Gastrocnemius medialis (tissue), 4 donors: ENCODE measurements at regions of chr1 and their contacts with region 1.

Region 1: GRCh38 chr1:172938676-172939075 is 112.1 kb downstream of the TNFSF18 start:
- DNase-seq: no peak
- ATAC-seq: no peak
- H3K4me3 ChIP-seq: no peak overlapping the region
- H3K27ac ChIP-seq: no peak overlapping the region
- H3K4me1 ChIP-seq: no peaks in the 10 kb centered on the region
- H3K27me3 ChIP-seq: no peaks in the 10 kb centered on the region
- CTCF ChIP-seq: no peak
- POLR2A ChIP-seq: no peak

Region 2: DNA sequence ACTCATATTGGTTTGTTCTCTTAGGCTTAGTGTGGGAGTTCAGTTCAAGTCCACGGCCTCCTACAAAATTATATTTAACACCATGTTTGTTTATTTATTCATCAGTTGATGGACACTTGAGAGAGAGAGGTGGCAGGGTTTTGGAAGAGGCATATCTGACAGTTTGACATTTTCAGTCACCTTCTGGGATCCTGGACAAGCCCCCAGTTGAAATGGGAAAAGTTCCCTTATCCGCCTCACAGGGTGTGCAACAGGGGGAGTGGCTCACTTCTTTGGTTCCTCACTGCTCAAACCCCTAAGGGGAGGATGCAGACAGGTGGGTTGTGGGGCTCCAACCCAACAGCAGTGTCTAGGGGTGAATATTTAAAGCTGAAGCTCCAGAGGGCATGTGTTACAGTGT is 164.3 kb after region 1 on chr1:
- in situ Hi-C with region 1: no loop called
- intact Hi-C with region 1: no loop called
- DNase-seq: no peak
- ATAC-seq: no peak
- H3K4me3 ChIP-seq: no peak overlapping the region
- H3K27ac ChIP-seq: no peak overlapping the region
- H3K4me1 ChIP-seq: no peaks in the 10 kb centered on the region
- H3K27me3 ChIP-seq: no peaks in the 10 kb centered on the region
- CTCF ChIP-seq: no peak
- POLR2A ChIP-seq: no peak

Region 3: GRCh38 chr1:173122958-173123852 is 184.5 kb after region 1 on chr1:
- in situ Hi-C with region 1: no loop called
- intact Hi-C with region 1: loop called (anchors 10 kb)
- DNase-seq: peak; percentile 48 to 58
- ATAC-seq: peak; percentile 78 to 83
- H3K4me3 ChIP-seq: peak overlapping the region; percentile 17 to 49 (median 32)
- H3K27ac ChIP-seq: peak overlapping the region; percentile 53 to 77 (median 66)
- H3K4me1 ChIP-seq: peaks cover 5 to 11% of the 10 kb centered on the region in 2 donors
- H3K27me3 ChIP-seq: no peaks in the 10 kb centered on the region
- CTCF ChIP-seq: no peak
- POLR2A ChIP-seq: no peak